ENCODE measurements at regions of chr17 and their contacts with region 1.

Region 1: DNA sequence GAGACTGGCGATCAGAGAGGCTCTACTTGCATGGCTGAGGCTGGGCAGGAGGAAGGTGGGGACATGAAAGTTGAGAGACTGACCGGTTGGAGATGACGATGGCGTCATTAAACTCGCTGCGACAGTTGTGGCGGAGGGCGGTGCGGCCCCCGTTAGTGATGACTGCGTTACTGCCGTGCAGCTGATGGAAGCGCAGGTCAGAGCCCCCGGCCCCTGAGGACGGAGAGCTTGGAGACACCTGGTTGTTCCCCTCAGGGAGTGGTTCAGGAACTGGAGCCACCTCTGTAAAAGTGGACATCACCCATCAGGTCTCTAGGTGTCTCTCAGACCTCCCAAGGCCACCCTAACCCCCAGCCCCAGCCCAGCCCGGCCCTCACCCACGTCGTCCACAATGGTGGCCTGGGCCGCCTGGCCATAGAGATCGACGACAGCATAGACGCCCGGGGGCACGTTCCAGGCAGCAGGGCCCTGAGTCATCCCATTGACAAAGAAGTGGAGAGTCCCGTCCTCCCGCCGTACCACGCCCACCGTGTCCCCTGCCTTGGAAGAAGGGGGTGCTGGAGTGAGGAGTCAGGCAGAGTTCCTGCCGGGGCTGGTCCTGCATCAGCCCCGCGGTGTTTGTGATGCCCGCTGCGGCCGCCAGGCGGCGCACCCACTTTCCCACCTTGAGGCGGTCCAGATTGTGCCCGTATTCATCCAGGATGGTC is 5.3 kb downstream of the NEURL4 start:
- DNase-seq: peak; percentile 41 to 79 (median 62)
- ATAC-seq: peak; percentile 56
- H3K4me3 ChIP-seq: no peak overlapping the region
- H3K4me3 Mint-ChIP-seq: no peak overlapping the region
- H3K27ac ChIP-seq: no peak overlapping the region
- H3K27ac Mint-ChIP-seq: peak overlapping the region in 2 of 9 donors; percentile 41 to 52
- H3K4me1 ChIP-seq: peaks cover 0 to 7% of the 10 kb centered on the region in 2 donors
- H3K4me1 Mint-ChIP-seq: peaks cover 9 to 34% (median 18%) of the 10 kb centered on the region in 7 donors
- H3K27me3 ChIP-seq: no peaks in the 10 kb centered on the region
- H3K27me3 Mint-ChIP-seq: no peaks in the 10 kb centered on the region

Region 2: GRCh38 chr17:6989779-6990178 is 334.1 kb before region 1 on chr17:
- CTCF ChIA-PET with region 1: no interaction called
- POLR2A ChIA-PET with region 1: no interaction called
- intact Hi-C with region 1: no loop called
- DNase-seq: no peak
- ATAC-seq: no peak
- H3K4me3 ChIP-seq: no peak overlapping the region
- H3K4me3 Mint-ChIP-seq: no peak overlapping the region
- H3K27ac ChIP-seq: no peak overlapping the region
- H3K27ac Mint-ChIP-seq: peak overlapping the region in 1 of 9 donors; percentile 21
- H3K4me1 ChIP-seq: no peaks in the 10 kb centered on the region
- H3K4me1 Mint-ChIP-seq: peaks cover 0 to 5% (median 0%) of the 10 kb centered on the region in 7 donors
- H3K27me3 ChIP-seq: no peaks in the 10 kb centered on the region
- H3K27me3 Mint-ChIP-seq: no peaks in the 10 kb centered on the region

Region 3: DNA sequence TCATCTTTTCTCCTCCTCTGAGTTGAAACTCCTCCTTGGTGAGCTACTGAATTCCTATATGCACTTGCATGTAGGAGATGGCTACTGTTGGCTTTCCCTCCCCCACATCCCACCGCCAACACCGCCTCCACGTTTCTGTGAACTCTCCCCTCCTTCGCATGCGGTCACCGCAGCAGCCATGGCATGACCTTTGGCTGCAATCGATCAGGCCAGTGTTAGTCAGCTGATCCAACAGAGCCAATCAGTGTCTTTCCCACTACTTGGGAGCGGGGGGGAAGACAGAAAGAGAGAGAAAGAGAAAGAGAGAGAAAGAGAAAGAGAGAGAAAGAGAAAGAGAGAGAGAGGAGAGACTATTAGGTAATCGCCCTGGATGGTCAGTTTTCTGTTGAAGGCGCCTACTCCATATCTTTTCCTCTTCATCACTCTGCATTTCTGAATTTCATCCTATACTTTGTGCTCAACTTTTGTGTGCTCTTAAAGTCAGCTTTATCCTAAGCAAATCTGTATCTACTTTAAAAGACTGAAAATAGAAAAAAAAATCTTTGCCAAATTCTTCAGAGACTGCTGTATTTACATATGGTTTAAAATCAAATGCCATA is 167.4 kb before region 1 on chr17:
- CTCF ChIA-PET with region 1: no interaction called
- POLR2A ChIA-PET with region 1: no interaction called
- intact Hi-C with region 1: no loop called
- DNase-seq: no peak
- ATAC-seq: no peak
- H3K4me3 ChIP-seq: no peak overlapping the region
- H3K4me3 Mint-ChIP-seq: no peak overlapping the region
- H3K27ac ChIP-seq: no peak overlapping the region
- H3K27ac Mint-ChIP-seq: peak overlapping the region in 1 of 9 donors; percentile 73
- H3K4me1 ChIP-seq: no peaks in the 10 kb centered on the region
- H3K4me1 Mint-ChIP-seq: peaks cover 0 to 3% (median 0%) of the 10 kb centered on the region in 7 donors
- H3K27me3 ChIP-seq: no peaks in the 10 kb centered on the region
- H3K27me3 Mint-ChIP-seq: peaks cover 0 to 42% (median 20%) of the 10 kb centered on the region in 5 donors

Region 4: DNA sequence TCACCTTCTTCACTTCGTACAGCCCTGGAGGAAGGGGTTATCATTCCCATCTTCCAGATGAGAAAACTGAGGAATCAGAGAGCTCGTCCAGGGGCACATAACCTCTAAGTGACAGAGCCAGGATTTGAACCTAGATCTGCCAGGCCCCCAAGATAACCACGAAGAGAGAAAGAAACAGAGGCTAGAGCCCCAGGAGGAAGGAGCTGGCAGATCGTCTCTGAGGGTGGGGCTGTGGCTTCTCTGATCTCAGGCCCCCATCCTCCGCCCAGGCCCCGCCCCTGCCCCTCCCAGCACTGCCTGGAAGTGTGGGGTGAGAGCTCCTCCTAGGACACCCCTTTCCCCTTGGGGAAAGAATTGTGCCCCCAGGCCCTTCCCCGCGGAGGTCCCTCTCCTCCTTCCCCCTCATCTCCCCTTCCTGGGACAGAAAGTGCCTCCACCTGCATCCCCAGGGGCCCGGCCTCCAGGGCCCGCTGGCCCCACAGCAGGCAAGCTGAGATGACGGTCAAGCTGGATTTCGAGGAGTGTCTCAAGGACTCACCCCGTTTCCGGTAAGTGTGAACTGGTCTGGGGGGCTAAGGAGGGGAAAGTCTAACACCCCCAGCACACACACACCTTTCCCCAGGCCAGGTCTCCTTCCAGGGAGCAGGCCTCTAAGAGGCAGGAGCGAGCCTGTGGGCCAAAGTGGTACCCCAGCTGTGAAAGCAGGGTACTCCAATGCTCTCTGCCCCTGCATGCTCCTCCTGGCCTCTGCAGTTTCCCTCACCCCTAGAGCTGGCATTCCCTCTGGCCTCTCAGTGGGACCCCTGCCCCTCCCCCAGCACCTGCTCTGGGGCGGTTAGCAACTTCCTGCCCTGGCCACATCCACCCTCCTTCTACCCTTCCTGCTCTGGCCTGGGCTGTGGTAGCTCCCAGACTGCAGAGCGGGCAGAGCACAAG is 12.6 kb after region 1 on chr17 and contains the start of gene ACAP1:
- CTCF ChIA-PET with region 1: interaction called, 22 read pairs
- POLR2A ChIA-PET with region 1: interaction called, 336 read pairs
- intact Hi-C with region 1: loop called (anchors 1 kb)
- DNase-seq: peak; percentile 56 to 85 (median 82)
- ATAC-seq: peak; percentile 99
- H3K4me3 ChIP-seq: peak within 1 kb of the TSS; percentile 99
- H3K4me3 Mint-ChIP-seq: peak within 1 kb of the TSS; percentile 89 to 99 (median 94)
- H3K27ac ChIP-seq: peak within 1 kb of the TSS; percentile 81
- H3K27ac Mint-ChIP-seq: peak within 1 kb of the TSS; percentile 89 to 100 (median 95)
- H3K4me1 ChIP-seq: peaks cover 31 to 44% of the 10 kb centered on the region in 2 donors
- H3K4me1 Mint-ChIP-seq: peaks cover 49 to 76% (median 60%) of the 10 kb centered on the region in 7 donors
- H3K27me3 ChIP-seq: no peaks in the 10 kb centered on the region
- H3K27me3 Mint-ChIP-seq: no peaks in the 10 kb centered on the region
- total RNA-seq, gene ACAP1: 482 to 708 (median 599) TPM

Region 5: GRCh38 chr17:8366231-8366630 is 1042.3 kb after region 1 on chr17:
- CTCF ChIA-PET with region 1: no interaction called
- POLR2A ChIA-PET with region 1: no interaction called
- intact Hi-C with region 1: no loop called
- DNase-seq: no peak
- ATAC-seq: no peak
- H3K4me3 ChIP-seq: no peak overlapping the region
- H3K4me3 Mint-ChIP-seq: no peak overlapping the region
- H3K27ac ChIP-seq: no peak overlapping the region
- H3K27ac Mint-ChIP-seq: no peak overlapping the region
- H3K4me1 ChIP-seq: no peaks in the 10 kb centered on the region
- H3K4me1 Mint-ChIP-seq: peaks cover 0 to 9% (median 8%) of the 10 kb centered on the region in 7 donors
- H3K27me3 ChIP-seq: no peaks in the 10 kb centered on the region
- H3K27me3 Mint-ChIP-seq: no peaks in the 10 kb centered on the region

Measured in naive thymus-derived CD4-positive, alpha-beta T cell (primary cell).